ENCODE measurements at regions of chr7 and their contacts with region 1.

Region 1: DNA sequence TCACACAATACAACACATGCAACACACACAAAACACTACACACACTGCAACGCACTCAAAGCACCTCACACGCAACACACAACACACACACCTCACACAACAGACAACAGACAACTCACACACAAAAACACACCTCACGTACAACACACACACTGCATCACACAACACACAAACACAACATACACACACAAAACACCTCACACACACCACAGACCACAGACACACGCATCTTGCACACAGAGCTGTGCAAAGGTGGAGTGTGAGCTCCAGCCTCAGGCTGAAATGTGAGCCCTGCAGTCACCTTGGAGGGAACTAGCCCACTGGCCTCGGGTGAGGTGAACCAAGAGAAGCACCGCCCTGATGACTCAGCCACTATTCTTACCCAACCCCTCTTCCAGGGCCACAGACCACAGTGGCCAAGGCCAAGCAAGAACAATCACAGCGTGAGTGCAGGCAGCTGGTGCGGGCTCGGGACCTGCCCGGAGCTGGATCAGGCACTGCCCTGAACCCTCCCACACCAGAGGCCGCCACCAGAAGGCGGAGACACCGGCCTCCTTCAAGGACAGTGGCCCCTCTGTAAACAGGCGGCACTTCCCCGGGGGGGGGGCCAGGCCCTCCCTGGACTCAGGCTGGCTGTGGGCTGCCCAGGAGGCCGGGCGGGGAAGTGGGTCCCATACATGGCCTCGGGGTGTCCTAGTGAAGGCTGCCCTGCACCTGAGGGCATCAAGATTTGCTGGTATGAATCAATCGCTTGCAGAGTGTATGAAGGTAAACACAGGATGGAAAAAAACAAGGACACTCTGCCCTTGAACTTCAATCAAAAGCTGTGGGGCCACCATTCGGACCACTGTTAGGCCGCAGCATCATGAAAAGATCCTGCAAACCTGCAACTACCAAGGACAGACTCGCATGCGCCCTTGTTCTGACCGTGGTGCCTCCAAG is 106.7 kb downstream of the TNS3 start:
- DNase-seq: peak; percentile 90 to 95 (median 93)
- ATAC-seq: peak; percentile 70 to 81 (median 77)
- H3K4me3 ChIP-seq: peak overlapping the region in 1 of 3 donors; percentile 9
- H3K27ac ChIP-seq: peak overlapping the region; percentile 69 to 82 (median 80)
- H3K4me1 ChIP-seq: peaks cover 0 to 69% (median 29%) of the 10 kb centered on the region in 4 donors
- H3K27me3 ChIP-seq: no peaks in the 10 kb centered on the region
- CTCF ChIP-seq: peak; percentile 17 to 39 (median 20)
- POLR2A ChIP-seq: peak; percentile 57

Region 2: DNA sequence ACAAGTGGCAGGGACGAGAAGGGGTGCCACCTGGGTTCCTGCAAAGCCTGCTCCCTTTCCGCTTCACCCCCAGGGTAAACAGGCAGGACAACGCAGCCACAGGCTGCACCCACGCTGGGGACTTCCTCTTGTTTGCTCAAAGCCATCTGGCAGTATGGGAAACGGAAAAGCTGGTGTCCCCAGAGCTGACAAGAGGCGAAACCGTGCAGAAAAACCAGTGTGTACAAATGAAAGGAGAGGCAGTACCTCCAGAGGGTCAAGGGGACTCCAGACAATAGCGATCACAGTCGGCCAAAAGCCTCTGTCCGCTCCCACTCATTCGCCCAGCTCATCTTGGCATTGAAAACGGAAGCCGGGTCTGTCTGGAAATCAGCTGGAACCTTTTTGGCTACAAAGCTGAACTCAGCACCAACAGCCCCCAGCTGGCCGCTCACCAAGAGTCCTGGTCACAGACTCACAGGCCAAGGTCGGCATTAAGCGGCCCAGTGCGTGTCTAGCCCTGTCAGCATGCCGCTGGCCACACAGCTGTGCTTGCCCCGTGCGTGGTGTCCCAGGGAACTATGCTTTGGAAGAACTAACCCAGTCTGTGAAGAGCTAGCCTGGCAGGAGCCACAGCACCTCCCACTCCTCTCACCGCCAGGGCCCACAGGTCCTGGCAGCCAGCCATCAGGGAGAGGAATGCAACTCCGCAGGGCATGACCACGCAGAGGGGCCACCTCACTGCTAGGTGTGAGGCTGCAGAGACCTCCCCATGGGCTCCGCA is 96.3 kb after region 1 on chr7:
- intact Hi-C with region 1: loop called in 1 of 2 experiments (anchors 10 kb)
- DNase-seq: peak; percentile 89 to 92 (median 89)
- ATAC-seq: peak; percentile 68 to 84 (median 76)
- H3K4me3 ChIP-seq: peak overlapping the region in 2 of 3 donors; percentile 1 to 20
- H3K27ac ChIP-seq: peak overlapping the region; percentile 60 to 81 (median 71)
- H3K4me1 ChIP-seq: peaks cover 3 to 80% (median 35%) of the 10 kb centered on the region in 4 donors
- H3K27me3 ChIP-seq: no peaks in the 10 kb centered on the region
- CTCF ChIP-seq: no peak
- POLR2A ChIP-seq: peak; percentile 40